Common myeloid progenitor, CD34-positive (primary cell): ENCODE measurements at regions of chr14 and their contacts with region 1.

Region 1: DNA sequence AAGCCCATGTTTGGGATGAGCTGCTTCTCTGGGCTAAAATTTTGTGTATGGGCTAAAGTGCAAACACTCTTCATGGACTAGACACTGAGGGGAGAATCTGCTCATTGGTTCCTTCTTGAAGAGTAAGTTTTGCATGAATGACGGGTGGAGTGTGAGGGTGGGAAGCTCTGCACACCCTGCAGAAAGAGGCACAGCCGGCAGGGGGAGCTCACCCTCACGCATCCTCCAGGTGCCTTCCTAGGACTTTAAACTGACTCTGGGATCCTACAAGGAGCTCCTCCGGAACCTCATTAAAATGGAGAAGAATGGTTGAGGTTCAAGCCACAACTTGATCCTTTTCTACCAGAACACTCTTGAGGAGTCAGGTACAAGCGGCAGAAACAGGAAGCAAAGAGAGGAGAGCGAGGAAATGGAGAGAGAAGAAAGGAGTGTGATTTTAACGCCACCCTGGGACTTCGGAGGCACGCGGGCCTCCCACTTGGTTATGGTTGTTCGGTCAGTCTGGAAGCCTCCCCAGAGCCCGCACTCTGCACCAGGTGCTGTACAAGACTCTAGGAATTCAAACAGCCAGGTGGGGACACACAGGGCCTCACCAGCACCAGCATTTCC is 87.5 kb downstream of the SETD3 start:
- DNase-seq: peak; percentile 17 to 43 (median 39)
- H3K4me3 ChIP-seq: no peak overlapping the region
- H3K27ac ChIP-seq: no peak overlapping the region
- H3K4me1 ChIP-seq: peaks cover 0 to under 1% (median 0%) of the 10 kb centered on the region in 4 experiments
- H3K27me3 ChIP-seq: no peaks in the 10 kb centered on the region

Region 2: DNA sequence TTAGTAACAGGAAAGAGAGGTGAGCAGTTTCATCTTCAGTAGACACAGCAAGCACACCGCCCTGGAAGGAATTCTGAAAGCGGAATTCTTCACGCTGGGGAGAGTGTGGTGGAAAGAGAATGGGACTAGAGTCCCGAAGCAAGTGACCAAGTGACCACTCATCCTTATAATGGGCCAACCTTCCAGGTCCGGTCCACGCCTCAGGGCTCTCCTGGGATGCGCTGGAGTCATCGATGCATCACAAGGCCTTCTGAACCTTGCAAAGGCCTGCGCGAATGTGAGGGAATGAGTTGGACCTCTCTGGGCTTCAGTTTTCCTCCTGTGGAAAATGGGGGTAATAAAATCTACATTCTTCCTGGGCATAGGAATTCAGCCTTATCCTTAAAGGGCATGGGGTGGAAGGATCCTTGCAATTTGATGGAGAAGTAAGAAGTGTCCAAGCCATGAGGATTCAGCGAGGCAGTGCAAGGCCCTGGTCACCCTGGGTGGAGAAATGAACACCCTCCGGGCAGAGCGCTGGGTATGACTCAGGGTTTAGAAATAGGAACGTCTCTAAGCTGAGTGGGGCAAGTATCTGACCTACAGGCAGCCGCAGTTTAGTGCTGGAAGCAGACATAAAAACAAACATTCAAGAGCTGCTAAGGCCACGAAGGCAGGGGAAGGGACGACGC is 10.2 kb before region 1 on chr14:
- CTCF ChIA-PET with region 1: interaction called, 14 read pairs
- POLR2A ChIA-PET with region 1: no interaction called
- DNase-seq: no peak
- H3K4me3 ChIP-seq: no peak overlapping the region
- H3K27ac ChIP-seq: no peak overlapping the region
- H3K4me1 ChIP-seq: peaks cover 0 to 5% (median 0%) of the 10 kb centered on the region in 4 experiments
- H3K27me3 ChIP-seq: peaks cover 0 to 32% (median 13%) of the 10 kb centered on the region in 5 experiments